Activated CD8-positive, alpha-beta T cell treated with anti-CD3 and anti-CD28 coated beads, Interleukin-2, amount 10 ng/mL, durations not matched to agents 7 days and 5 days (primary cell): ENCODE measurements at regions of chr6 and their contacts with region 1.

Region 1: DNA sequence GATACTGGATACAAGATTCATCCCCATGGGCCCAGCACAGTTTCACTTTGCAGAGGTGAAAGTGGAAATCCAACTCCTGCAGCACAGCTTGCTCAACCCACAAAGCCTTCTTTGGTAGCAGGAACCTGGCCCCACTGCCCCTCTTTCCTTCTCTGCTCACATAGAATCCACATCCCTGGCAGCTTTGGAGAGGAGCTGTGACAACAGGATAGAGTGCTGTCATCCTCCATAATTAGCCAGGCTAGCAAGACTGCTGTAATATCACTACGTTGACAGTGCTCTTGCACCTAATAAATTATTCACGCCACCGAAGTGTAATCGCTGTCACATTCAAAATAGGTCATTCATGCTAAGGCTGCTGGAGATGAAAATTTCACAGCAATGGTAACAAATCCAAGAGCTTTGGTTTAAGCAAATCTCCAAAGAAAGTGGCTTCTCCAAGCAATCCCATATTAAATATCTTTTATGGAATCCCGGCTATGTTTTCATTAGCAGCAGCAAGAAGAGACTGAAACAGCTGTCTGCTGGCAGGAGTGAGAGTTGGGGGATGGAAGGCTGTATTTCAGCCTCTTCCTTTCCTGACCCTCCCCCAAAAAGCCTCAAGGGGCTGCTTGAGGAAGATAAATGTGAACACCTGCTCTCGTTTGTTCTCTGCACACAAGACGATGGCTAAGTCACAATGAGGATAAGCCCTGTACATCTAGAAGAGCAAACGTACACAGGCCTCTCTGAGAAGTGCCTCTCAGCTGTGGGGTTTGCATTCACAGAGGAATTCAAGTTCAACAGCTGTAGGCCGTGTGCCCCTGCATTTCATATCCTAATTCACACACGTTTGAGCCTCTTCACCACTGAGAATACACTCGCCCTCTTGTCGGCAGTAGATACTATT is 16.5 kb downstream of the RIPOR2 start:
- DNase-seq: peak; percentile 44
- ATAC-seq: peak; percentile 50
- H3K4me3 Mint-ChIP-seq: peak overlapping the region; percentile 53
- H3K27ac Mint-ChIP-seq: peak overlapping the region; percentile 62
- H3K4me1 Mint-ChIP-seq: peaks cover 86% of the 10 kb centered on the region
- H3K27me3 Mint-ChIP-seq: no peaks in the 10 kb centered on the region

Region 2: GRCh38 chr6:24494821-24495795 is 424.1 kb before region 1 on chr6 and contains the start of gene ALDH5A1:
- CTCF ChIA-PET with region 1: no interaction called
- POLR2A ChIA-PET with region 1: no interaction called
- DNase-seq: peak; percentile 80
- ATAC-seq: peak; percentile 87
- H3K4me3 Mint-ChIP-seq: peak within 1 kb of the TSS; percentile 74
- H3K27ac Mint-ChIP-seq: peak within 1 kb of the TSS; percentile 25
- H3K4me1 Mint-ChIP-seq: peaks cover 14% of the 10 kb centered on the region
- H3K27me3 Mint-ChIP-seq: no peaks in the 10 kb centered on the region
- total RNA-seq, gene ALDH5A1: 4.8 to 4.9 TPM

Region 3: DNA sequence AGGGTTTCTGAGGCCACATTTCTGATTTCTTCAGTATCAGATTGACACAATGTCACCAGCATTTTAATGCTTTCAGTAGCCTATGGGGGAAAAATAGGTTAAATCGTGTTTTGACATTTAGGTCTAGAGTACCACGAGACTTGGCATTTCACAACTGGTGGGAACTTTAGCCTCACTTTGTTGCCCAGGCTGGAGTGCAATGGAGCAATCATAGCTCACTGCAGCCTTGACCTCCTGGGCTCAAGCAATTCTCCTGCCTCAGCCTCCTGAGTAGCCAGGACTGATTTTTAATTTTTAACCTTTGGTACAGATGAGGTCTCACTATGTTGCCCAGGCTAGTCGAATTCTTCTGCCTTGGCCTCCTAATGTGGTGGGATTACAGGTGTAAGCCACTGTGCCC is 109.5 kb before region 1 on chr6:
- CTCF ChIA-PET with region 1: no interaction called
- POLR2A ChIA-PET with region 1: no interaction called
- DNase-seq: no peak
- ATAC-seq: no peak
- H3K4me3 Mint-ChIP-seq: no peak overlapping the region
- H3K27ac Mint-ChIP-seq: no peak overlapping the region
- H3K4me1 Mint-ChIP-seq: no peaks in the 10 kb centered on the region
- H3K27me3 Mint-ChIP-seq: no peaks in the 10 kb centered on the region

Region 4: GRCh38 chr6:24888715-24889370 is 30.4 kb before region 1 on chr6:
- CTCF ChIA-PET with region 1: interaction called, 10 read pairs
- POLR2A ChIA-PET with region 1: no interaction called
- DNase-seq: no peak
- ATAC-seq: no peak
- H3K4me3 Mint-ChIP-seq: no peak overlapping the region
- H3K27ac Mint-ChIP-seq: peak overlapping the region; percentile 44
- H3K4me1 Mint-ChIP-seq: peaks cover 72% of the 10 kb centered on the region
- H3K27me3 Mint-ChIP-seq: no peaks in the 10 kb centered on the region